ENCODE measurements at regions of chr6 and their contacts with region 1.

Region 1: DNA sequence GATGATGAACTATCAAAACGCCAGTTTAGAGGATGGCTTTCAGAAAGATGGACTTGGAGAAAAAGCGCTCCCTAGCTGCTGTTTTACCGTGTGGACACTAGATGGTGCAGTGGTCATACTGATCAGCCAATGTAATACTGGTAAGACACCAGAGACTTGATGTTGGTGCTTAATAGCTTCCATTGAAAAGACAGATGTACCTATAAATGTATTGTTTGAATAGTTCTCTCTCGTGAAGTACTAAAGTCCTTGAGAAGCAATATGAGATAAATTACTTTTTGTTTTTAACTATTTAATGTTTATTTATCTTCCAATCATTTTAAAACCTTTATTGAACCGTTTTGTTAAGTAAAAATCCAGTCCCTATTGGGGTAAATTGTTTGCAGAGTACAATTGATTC is 63.9 kb upstream of the FUCA2 start:
- DNase-seq: peak; percentile 66
- H3K4me3 ChIP-seq: no peak overlapping the region
- H3K27ac ChIP-seq: no peak overlapping the region
- H3K4me1 ChIP-seq: no peaks in the 10 kb centered on the region
- H3K27me3 ChIP-seq: no peaks in the 10 kb centered on the region
- CTCF ChIP-seq: peak; percentile 72 to 91 (median 86)
- POLR2A ChIP-seq: no peak

Region 2: GRCh38 chr6:143260857-143261256 is 314.6 kb before region 1 on chr6:
- intact Hi-C with region 1: no loop called
- DNase-seq: no peak
- H3K4me3 ChIP-seq: no peak overlapping the region
- H3K27ac ChIP-seq: no peak overlapping the region
- H3K4me1 ChIP-seq: no peaks in the 10 kb centered on the region
- H3K27me3 ChIP-seq: no peaks in the 10 kb centered on the region
- CTCF ChIP-seq: no peak
- POLR2A ChIP-seq: no peak

Region 3: DNA sequence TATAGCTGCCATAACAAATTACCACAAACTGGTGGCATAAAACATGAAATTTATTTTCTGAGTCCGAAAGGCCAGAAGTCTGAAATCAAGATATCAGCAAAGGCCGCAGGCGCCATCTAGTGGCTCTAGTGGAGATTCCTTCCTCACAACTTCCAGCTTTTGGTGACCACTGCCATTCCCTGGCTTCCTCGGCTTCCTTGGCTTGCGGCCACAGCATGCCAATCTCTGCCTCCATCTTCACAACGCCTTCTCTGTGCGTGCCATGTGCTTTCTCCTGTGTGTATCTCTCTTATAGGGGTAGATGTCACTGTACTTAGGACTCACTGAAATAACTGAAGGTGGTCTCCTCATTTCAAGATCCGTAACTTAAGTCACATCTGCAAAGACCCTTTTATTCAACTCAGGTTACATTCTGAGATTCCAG is 438.1 kb after region 1 on chr6:
- intact Hi-C with region 1: loop called (anchors 1 kb)
- DNase-seq: peak; percentile 71
- H3K4me3 ChIP-seq: no peak overlapping the region
- H3K27ac ChIP-seq: no peak overlapping the region
- H3K4me1 ChIP-seq: no peaks in the 10 kb centered on the region
- H3K27me3 ChIP-seq: no peaks in the 10 kb centered on the region
- CTCF ChIP-seq: peak; percentile 58 to 83 (median 82)
- POLR2A ChIP-seq: no peak

Region 4: DNA sequence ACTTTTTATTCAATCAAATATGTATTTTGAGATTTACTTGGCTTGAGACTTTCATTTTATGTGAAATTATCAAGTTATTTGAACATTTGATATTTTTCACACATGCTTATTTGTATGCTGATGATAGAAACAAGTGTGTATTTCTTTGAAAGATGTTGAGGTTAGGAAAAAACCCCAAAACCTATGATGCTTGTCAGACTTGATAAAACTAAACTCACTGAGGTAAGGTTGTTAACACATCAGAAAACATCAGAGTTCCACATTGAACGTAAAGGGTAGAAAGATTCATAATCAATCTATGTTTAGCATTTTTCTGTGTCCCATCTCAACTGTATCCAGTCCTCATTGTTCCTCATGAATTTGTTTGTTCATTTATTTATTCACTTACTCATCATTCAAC is 507.7 kb after region 1 on chr6:
- intact Hi-C with region 1: no loop called
- DNase-seq: no peak
- H3K4me3 ChIP-seq: no peak overlapping the region
- H3K27ac ChIP-seq: no peak overlapping the region
- H3K4me1 ChIP-seq: no peaks in the 10 kb centered on the region
- H3K27me3 ChIP-seq: no peaks in the 10 kb centered on the region
- CTCF ChIP-seq: no peak
- POLR2A ChIP-seq: no peak